MCF 10A (cell line): ENCODE measurements at regions of chr1 and their contacts with region 1.

Region 1: GRCh38 chr1:100575406-100575805 is 37.5 kb downstream of the GPR88 start:
- DNase-seq: peak; percentile 20
- H3K4me3 Mint-ChIP-seq: no peak overlapping the region
- H3K27ac Mint-ChIP-seq: no peak overlapping the region
- H3K4me1 Mint-ChIP-seq: no peaks in the 10 kb centered on the region
- H3K27me3 Mint-ChIP-seq: peaks cover 9% of the 10 kb centered on the region
- CTCF ChIP-seq: no peak

Region 2: DNA sequence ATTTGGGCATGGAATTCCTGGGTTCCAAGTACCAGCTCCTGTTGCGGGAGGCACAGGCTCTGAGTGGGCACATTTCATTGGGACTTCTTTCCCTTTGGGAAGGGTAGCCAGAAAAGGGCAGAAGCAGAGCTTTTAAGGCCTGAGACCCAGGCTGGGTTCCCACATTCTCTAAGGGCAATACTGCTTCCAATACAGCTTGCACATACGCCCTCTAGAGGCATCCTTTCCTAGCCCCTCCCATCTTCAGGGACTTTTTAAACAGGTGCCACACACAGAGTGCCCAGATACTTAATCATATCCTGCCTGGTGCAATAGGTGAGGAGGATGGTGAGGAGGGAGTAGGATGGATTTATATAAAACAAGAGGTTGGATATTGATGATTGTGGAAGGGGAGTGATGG is 31.8 kb before region 1 on chr1:
- CTCF ChIA-PET with region 1: no interaction called
- POLR2A ChIA-PET with region 1: no interaction called
- intact Hi-C with region 1: loop called (anchors 5 kb)
- DNase-seq: peak; percentile 56
- H3K4me3 Mint-ChIP-seq: no peak overlapping the region
- H3K27ac Mint-ChIP-seq: no peak overlapping the region
- H3K4me1 Mint-ChIP-seq: no peaks in the 10 kb centered on the region
- H3K27me3 Mint-ChIP-seq: peaks cover 3% of the 10 kb centered on the region
- CTCF ChIP-seq: peak; percentile 23

Region 3: DNA sequence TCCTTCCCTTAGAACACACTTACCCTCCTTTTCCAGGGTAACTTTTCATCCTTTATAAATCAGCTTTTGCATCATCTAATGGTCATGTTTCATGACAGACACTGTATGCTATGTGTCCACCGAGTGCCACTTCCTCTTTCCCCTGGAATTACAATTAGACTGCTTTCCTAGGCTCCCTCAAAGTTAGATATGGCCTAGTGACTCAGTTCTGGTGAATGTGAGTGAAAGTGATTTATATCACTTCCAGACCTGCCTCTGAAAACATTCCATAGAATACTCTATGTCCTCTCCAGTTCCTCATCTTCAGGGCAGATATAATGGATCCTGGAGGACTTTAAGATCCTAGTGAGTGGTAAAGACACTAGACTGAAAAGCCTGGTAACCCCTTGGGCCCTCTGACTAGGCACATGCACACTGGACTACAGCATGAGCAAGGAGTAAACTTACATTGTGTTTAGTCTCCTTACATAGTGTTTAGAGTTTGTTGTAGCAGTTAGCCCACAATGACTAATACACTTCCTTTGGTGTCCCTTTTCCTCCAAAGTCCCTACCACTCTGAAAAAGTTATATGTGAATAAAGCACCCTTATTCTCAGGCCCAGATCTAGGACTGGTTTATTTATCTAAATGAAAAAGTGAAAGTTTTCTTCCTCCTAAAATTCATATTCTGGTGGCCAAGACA is 21.8 kb after region 1 on chr1:
- CTCF ChIA-PET with region 1: no interaction called
- POLR2A ChIA-PET with region 1: no interaction called
- intact Hi-C with region 1: no loop called
- DNase-seq: peak; percentile 11
- H3K4me3 Mint-ChIP-seq: no peak overlapping the region
- H3K27ac Mint-ChIP-seq: no peak overlapping the region
- H3K4me1 Mint-ChIP-seq: no peaks in the 10 kb centered on the region
- H3K27me3 Mint-ChIP-seq: no peaks in the 10 kb centered on the region
- CTCF ChIP-seq: no peak

Region 4: DNA sequence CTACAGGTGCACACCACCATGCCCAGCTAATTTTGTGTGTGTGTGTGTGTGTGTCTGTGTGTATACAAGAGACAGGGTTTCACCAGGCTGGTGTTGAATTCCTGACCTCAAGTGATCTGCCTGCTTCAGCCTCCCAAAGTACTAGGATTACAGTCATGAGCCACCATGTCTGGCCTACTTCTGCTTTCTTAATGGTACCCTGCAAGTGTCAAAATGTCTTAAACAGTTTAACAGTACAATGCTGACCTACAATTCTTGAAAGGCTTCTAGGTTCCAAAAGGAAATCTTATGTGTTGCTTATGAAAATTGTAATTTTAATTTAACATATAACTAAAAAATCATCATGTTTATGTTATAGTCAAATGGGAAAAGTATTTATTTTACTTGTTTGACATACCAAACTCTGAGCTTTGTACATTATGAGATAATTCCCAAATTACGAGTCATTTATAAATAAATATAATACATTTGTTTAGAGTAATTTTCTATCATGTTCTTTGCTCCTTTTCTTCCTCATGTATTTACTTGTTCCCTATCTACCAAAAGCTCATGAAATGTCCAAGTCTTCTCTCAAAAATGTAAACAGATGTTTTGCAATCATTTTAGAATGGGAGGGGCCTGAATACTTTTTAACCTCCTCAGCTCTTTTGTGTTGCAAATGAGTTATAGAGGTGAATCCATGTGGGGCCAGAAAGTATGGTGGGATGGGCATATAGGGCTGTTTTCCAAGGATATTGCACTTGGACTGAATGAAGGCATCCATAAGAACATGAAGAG is 135.7 kb after region 1 on chr1:
- CTCF ChIA-PET with region 1: no interaction called
- POLR2A ChIA-PET with region 1: no interaction called
- intact Hi-C with region 1: no loop called
- DNase-seq: peak; percentile 22
- H3K4me3 Mint-ChIP-seq: no peak overlapping the region
- H3K27ac Mint-ChIP-seq: no peak overlapping the region
- H3K4me1 Mint-ChIP-seq: no peaks in the 10 kb centered on the region
- H3K27me3 Mint-ChIP-seq: no peaks in the 10 kb centered on the region
- CTCF ChIP-seq: no peak